Mucosa of descending colon (tissue), 3 donors: ENCODE measurements at regions of chr14 and their contacts with region 1.

Region 1: DNA sequence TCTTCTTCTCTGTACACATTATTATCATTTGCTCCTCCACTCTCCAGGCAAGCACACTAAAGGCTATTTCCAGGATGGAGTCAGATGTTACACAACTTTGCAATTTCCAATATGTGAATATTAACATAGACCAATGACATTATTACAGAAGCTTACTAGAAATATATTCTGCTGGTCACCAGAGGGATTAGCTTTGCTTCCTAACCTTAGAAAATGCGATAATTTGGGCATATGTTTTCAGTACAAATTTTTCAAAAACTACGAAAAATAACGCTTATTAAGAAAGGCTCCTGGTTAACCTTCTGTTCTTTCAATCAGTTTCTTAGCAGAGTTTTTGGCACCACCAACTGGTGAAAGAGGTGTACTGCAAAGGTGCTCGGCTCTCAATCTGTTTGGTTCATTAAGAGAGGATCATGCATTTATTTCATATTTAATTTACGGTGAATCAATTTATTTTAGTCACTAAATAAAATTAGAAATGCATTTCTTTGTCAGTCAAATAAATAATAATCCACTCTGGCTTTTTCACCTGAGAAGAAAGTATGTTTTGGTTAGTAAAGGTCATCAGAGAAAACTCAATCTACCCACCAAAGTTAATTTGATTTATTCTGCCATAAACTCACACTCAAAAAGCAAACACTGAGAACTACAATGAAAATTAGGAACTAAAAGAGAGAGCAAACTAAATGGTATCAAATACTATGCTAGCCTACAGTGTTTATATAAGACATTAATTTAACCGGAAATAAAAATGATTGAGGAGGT is 39.2 kb downstream of the EFCAB11 start:
- DNase-seq: peak in 2 of 3 donors; percentile 40 to 81
- ATAC-seq: peak; percentile 39
- H3K4me3 ChIP-seq: no peak overlapping the region
- H3K4me1 ChIP-seq: peaks cover 25% of the 10 kb centered on the region
- CTCF ChIP-seq: peak; percentile 89

Region 2: DNA sequence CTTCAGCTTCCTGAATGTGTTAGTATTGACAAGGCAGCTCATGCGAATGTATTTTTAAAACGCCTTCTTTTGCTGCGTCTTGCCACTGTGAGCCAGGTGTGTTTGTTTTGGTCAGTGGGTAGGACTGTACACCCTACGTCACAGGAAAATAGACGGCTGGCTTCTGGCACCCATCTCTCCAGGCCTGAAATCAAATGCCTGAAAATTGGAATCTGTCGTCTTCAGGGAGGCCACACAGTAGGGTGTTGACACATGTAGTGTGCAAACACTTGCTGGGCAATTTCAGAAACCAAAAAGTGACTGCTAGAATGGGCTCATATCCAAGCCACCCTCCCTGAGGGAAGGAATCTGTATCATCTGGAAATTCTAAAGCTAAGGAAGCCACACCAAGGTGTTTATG is 881.5 kb before region 1 on chr14:
- intact Hi-C with region 1: loop called in 1 of 2 experiments (anchors 10 kb)
- DNase-seq: no peak
- ATAC-seq: no peak
- H3K4me3 ChIP-seq: no peak overlapping the region
- H3K4me1 ChIP-seq: no peaks in the 10 kb centered on the region
- CTCF ChIP-seq: no peak

Region 3: DNA sequence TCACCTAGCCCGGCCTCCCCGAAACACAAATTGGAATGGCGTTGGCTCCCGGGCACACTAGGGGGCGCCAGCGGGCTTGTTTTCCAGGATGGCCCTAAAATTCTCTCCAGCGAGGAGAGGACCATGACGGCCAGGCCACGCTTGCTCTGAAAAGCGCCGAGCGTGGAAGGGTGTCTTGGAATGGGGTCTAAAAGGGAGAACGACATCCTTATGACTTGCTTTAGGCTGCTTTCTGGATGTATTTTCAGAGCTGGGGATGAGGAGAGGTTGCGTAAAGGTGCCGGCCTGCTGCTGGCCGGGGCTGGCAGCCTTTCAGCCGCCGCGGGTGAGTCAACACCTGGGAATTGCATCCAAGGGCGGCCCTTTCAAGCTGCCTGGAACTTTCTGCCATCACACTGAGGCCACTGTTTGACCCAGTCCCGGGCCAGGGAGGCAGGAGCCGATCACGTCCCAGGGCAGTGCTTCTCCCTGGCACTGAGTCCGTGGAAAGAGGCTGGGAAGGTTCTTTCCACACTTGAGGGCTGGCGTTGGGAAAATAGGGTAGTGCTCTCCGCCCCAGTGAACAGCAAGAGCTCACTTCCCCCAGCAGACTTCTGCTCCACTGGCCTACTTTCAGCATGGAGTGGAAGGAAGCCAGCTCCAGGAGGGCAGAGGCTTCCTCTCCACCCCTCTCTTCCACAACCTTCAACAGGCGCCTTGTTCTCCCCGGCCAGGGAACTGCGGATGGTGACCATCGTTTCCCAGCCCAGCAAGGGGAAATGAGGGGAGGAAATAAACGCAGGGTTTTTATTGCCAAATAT is 874.6 kb before region 1 on chr14:
- intact Hi-C with region 1: loop called (anchors 5 to 10 kb)
- DNase-seq: peak; percentile 82 to 94 (median 93)
- ATAC-seq: peak; percentile 89
- H3K4me3 ChIP-seq: no peak overlapping the region
- H3K4me1 ChIP-seq: peaks cover 12% of the 10 kb centered on the region
- CTCF ChIP-seq: peak; percentile 91

Region 4: DNA sequence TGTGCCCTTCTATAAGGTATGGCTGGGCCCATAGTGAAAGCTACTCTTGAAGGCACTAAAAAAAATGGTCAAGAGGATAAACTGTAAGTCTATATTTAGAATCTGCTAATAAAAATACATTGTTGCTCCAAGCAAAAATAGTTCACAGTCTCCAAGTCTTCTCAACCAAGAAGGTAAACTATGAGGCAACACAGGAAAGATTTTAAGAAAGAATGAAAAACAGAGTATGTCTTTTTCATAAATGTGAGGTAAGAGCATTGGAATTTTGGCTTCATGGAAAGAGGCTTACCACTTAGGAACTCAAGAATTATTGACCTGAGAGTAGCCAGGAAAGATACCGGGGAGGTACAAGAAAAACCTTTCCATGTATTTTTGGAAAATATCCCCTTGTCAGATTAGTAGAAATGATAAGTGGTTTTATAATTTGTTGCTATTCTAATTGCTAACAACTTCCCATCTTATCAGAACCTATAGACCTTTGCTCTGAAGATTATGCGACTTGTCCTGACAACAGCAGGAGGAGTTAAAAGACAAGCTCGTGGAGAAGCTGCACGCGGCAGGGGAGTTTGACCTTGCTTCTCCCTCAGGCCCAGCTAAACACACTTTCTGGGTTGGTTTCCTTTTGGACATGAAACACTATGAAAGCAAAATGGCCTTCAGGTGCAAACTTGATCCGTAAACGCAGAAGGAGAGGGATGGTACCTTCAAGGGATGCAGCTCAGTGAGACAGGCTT is 736.3 kb before region 1 on chr14:
- intact Hi-C with region 1: loop called in 1 of 2 experiments (anchors 5 kb)
- DNase-seq: no peak
- ATAC-seq: no peak
- H3K4me3 ChIP-seq: no peak overlapping the region
- H3K4me1 ChIP-seq: peaks cover 7% of the 10 kb centered on the region
- CTCF ChIP-seq: no peak